ENCODE measurements at regions of chr7 and their contacts with region 1.

Region 1: GRCh38 chr7:150988230-150989226 is 2.3 kb upstream of the NOS3 start:
- DNase-seq: no peak
- ATAC-seq: peak; percentile 65
- H3K4me3 ChIP-seq: no peak overlapping the region
- H3K27ac ChIP-seq: no peak overlapping the region
- H3K4me1 ChIP-seq: peaks cover 21% of the 10 kb centered on the region
- H3K27me3 ChIP-seq: no peaks in the 10 kb centered on the region
- CTCF ChIP-seq: peak; percentile 86

Region 2: GRCh38 chr7:150898475-150899011 is 90.0 kb before region 1 on chr7:
- intact Hi-C with region 1: loop called (anchors 5 kb)
- DNase-seq: peak; percentile 90
- ATAC-seq: peak; percentile 88
- H3K4me3 ChIP-seq: no peak overlapping the region
- H3K27ac ChIP-seq: no peak overlapping the region
- H3K4me1 ChIP-seq: no peaks in the 10 kb centered on the region
- H3K27me3 ChIP-seq: peaks cover 18% of the 10 kb centered on the region
- CTCF ChIP-seq: peak; percentile 99

Region 3: DNA sequence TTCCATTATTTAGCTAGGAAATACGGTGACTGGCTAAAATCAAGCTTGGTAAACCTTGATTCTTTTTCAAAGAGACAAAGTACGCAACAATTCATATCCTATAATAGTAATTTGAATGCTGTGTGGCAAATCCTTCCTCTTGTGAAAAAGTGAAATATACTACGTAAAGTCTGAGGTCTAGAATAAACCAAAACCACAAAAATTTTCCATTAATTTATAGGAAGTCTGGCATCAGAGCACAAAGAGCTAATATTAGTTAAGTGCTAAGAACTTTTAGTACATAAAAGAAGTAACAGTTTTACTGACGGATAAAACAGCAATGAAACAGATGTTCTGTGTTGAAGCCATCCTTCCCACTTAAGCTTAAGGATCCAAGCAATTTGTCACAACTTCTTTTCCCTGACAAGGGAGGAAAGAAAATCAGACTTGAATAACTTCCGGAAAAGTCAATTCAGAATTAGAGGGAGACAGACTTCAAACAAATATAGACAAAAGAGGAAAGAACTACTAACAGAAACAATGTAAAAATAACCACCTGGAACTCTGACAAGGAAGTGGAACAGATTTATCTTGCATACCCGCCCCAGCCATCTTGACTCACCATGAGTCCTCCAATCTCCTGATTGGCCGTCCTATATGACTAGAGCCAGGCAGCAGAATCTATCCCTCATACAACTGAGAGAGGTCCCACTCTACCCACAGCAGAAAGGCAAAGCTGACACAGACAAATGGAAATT is 496.6 kb after region 1 on chr7:
- intact Hi-C with region 1: no loop called
- DNase-seq: no peak
- ATAC-seq: peak; percentile 39
- H3K4me3 ChIP-seq: no peak overlapping the region
- H3K27ac ChIP-seq: no peak overlapping the region
- H3K4me1 ChIP-seq: peaks cover 20% of the 10 kb centered on the region
- H3K27me3 ChIP-seq: no peaks in the 10 kb centered on the region
- CTCF ChIP-seq: no peak